CD4-positive, alpha-beta T cell (primary cell): ENCODE measurements at regions of chr10 and their contacts with region 1.

Region 1: GRCh38 chr10:62732841-62733653 is 71.5 kb upstream of the ADO start:
- DNase-seq: peak in 13 of 14 experiments; percentile 12 to 90 (median 39)
- ATAC-seq: peak; percentile 87
- H3K4me3 ChIP-seq: no peak overlapping the region
- H3K4me3 Mint-ChIP-seq: peak overlapping the region; percentile 56
- H3K27ac ChIP-seq: peak overlapping the region; percentile 33 to 66
- H3K27ac Mint-ChIP-seq: no peak overlapping the region
- H3K4me1 ChIP-seq: peaks cover 49% of the 10 kb centered on the region
- H3K4me1 Mint-ChIP-seq: peaks cover 6% of the 10 kb centered on the region
- H3K27me3 ChIP-seq: no peaks in the 10 kb centered on the region
- H3K27me3 Mint-ChIP-seq: no peaks in the 10 kb centered on the region
- CTCF ChIP-seq: no peak

Region 2: DNA sequence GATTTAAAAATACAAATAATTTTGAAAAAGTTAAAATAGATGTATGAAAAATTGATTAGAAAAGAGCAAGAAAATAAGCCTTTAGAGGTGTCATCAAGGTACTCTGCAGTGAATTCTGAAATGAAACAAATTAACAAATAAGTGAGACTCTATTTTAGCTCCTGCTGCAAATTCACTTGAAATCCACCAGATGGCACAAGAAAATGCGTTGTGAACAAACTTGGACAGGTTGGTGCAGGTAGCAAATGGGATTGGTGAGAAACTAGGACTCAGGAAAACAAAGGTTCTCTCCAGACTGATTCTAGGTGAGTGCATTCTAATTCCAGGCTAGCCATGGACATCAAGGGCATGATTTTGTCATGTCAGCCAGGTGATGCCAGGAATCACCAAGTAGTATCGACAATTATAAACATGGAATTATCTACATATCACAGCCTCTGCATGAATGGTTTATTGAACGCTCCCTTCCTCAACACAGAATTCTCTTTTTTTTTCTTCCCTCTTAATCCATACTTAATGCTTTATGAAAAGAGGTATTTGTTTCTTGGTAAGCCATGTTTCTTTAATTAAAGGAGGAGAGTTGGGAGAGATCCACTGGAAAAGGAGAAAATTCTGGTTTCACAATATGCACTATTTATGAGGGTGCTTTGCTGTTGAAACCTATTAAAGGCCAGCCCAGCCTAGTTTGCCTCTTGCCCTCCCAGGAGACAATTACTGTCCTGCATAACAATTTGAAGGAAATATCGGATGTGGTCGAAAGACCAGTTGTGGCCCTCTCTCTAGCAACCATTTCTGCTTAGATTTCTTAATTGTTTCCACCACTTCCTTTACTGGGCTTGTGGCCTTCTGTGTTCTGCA is 240.8 kb before region 1 on chr10:
- CTCF ChIA-PET with region 1: no interaction called
- POLR2A ChIA-PET with region 1: no interaction called
- intact Hi-C with region 1: no loop called
- DNase-seq: peak in 3 of 14 experiments; percentile 25 to 57 (median 52)
- ATAC-seq: no peak
- H3K4me3 ChIP-seq: no peak overlapping the region
- H3K4me3 Mint-ChIP-seq: no peak overlapping the region
- H3K27ac ChIP-seq: no peak overlapping the region
- H3K27ac Mint-ChIP-seq: no peak overlapping the region
- H3K4me1 ChIP-seq: no peaks in the 10 kb centered on the region
- H3K4me1 Mint-ChIP-seq: peaks cover 4% of the 10 kb centered on the region
- H3K27me3 ChIP-seq: no peaks in the 10 kb centered on the region
- H3K27me3 Mint-ChIP-seq: peaks cover 18% of the 10 kb centered on the region
- CTCF ChIP-seq: peak; percentile 63

Region 3: DNA sequence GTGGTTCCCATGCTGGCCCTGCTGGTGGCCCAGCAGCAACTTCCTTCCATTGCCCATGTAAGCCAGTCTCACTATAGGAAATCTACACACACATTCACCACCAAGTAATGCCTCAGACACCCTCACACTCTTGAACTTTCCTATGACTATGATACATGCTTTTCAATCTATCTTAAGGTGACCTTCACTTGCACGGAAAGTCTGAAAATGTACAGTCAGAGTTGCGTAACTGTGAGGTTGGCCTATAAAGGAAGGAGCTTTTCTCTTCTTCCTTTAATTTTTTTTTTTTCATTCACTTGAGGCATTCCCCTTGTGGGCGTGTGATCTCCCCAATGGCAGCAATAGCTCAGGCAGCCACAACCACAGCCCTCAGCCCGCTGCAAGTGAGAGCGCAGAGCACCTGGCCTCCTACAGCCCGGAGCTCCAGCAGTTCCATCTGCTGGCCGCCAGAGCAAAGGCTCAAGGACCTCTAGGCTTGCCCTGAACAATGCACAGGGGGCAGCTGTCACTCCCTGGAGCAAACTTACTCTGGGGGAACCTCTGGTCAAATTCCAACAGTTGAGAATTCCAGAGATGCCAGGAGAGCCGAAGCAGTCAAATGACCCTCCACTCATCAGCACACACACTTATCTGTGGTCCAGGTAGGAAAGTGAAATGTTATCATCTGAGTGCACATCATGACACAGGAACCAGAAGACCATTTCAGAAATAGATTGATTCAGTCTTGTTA is 51.7 kb before region 1 on chr10:
- CTCF ChIA-PET with region 1: interaction called, 9 read pairs
- POLR2A ChIA-PET with region 1: no interaction called
- intact Hi-C with region 1: loop called in 1 of 2 experiments (anchors 1 kb)
- DNase-seq: peak; percentile 25 to 93 (median 45)
- ATAC-seq: peak; percentile 95
- H3K4me3 ChIP-seq: no peak overlapping the region
- H3K4me3 Mint-ChIP-seq: no peak overlapping the region
- H3K27ac ChIP-seq: no peak overlapping the region
- H3K27ac Mint-ChIP-seq: peak overlapping the region; percentile 2
- H3K4me1 ChIP-seq: peaks cover 15% of the 10 kb centered on the region
- H3K4me1 Mint-ChIP-seq: peaks cover 12% of the 10 kb centered on the region
- H3K27me3 ChIP-seq: no peaks in the 10 kb centered on the region
- H3K27me3 Mint-ChIP-seq: no peaks in the 10 kb centered on the region
- CTCF ChIP-seq: no peak

Region 4: GRCh38 chr10:62689712-62690111 is 43.3 kb before region 1 on chr10:
- CTCF ChIA-PET with region 1: interaction called, 4 read pairs
- POLR2A ChIA-PET with region 1: interaction called, 5 read pairs
- intact Hi-C with region 1: loop called (anchors 2 to 5 kb)
- DNase-seq: peak in 3 of 14 experiments; percentile 63 to 79 (median 65)
- ATAC-seq: peak; percentile 42
- H3K4me3 ChIP-seq: peak overlapping the region; percentile 2
- H3K4me3 Mint-ChIP-seq: peak overlapping the region; percentile 74
- H3K27ac ChIP-seq: peak overlapping the region in 1 of 2 donors; percentile 42
- H3K27ac Mint-ChIP-seq: peak overlapping the region; percentile 81
- H3K4me1 ChIP-seq: peaks cover 44% of the 10 kb centered on the region
- H3K4me1 Mint-ChIP-seq: peaks cover 58% of the 10 kb centered on the region
- H3K27me3 ChIP-seq: no peaks in the 10 kb centered on the region
- H3K27me3 Mint-ChIP-seq: no peaks in the 10 kb centered on the region
- CTCF ChIP-seq: no peak

Region 5: DNA sequence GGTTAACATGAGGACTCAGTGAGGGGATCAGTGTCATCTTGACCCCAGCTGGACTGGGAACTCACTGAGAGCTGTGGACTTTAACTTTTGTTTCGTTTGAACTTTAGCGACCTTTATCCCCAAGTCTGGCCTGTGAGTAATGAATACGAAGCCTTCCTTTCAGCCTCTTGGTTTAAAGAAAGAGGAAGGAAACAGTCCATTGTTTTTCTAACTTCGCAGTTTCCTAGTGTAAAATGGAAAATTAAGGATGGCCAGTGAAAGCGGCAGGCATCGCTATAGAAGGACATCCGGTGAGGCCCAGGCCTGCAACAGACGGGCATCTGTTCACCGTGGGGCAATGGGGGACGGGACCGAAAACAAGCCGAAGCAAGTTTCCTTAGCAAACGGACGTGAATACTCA is 27.4 kb after region 1 on chr10:
- CTCF ChIA-PET with region 1: no interaction called
- POLR2A ChIA-PET with region 1: interaction called, 10 read pairs
- intact Hi-C with region 1: loop called in 1 of 2 experiments (anchors 1 kb)
- DNase-seq: peak in 1 of 14 experiments; percentile 14
- ATAC-seq: no peak
- H3K4me3 ChIP-seq: no peak overlapping the region
- H3K4me3 Mint-ChIP-seq: no peak overlapping the region
- H3K27ac ChIP-seq: no peak overlapping the region
- H3K27ac Mint-ChIP-seq: no peak overlapping the region
- H3K4me1 ChIP-seq: peaks cover 12% of the 10 kb centered on the region
- H3K4me1 Mint-ChIP-seq: peaks cover 13% of the 10 kb centered on the region
- H3K27me3 ChIP-seq: no peaks in the 10 kb centered on the region
- H3K27me3 Mint-ChIP-seq: no peaks in the 10 kb centered on the region
- CTCF ChIP-seq: no peak

Region 6: GRCh38 chr10:62779487-62780248 is 46.6 kb after region 1 on chr10:
- CTCF ChIA-PET with region 1: interaction called, 3 read pairs
- POLR2A ChIA-PET with region 1: interaction called, 25 read pairs
- intact Hi-C with region 1: loop called in 1 of 2 experiments (anchors 1 kb)
- DNase-seq: peak; percentile 59 to 95 (median 71)
- ATAC-seq: peak; percentile 99
- H3K4me3 ChIP-seq: no peak overlapping the region
- H3K4me3 Mint-ChIP-seq: no peak overlapping the region
- H3K27ac ChIP-seq: no peak overlapping the region
- H3K27ac Mint-ChIP-seq: peak overlapping the region; percentile 34
- H3K4me1 ChIP-seq: peaks cover 16% of the 10 kb centered on the region
- H3K4me1 Mint-ChIP-seq: peaks cover 15% of the 10 kb centered on the region
- H3K27me3 ChIP-seq: no peaks in the 10 kb centered on the region
- H3K27me3 Mint-ChIP-seq: no peaks in the 10 kb centered on the region
- CTCF ChIP-seq: no peak

Region 7: GRCh38 chr10:62804356-62805230 is 71.5 kb after region 1 on chr10 and contains the start of gene ADO:
- CTCF ChIA-PET with region 1: interaction called, 3 read pairs
- POLR2A ChIA-PET with region 1: interaction called, 27 read pairs
- intact Hi-C with region 1: loop called (anchors 1 to 5 kb)
- DNase-seq: peak; percentile 63 to 90 (median 72)
- ATAC-seq: peak; percentile 89
- H3K4me3 ChIP-seq: peak within 1 kb of the TSS; percentile 64
- H3K4me3 Mint-ChIP-seq: peak within 1 kb of the TSS; percentile 93
- H3K27ac ChIP-seq: peak within 1 kb of the TSS; percentile 76 to 94
- H3K27ac Mint-ChIP-seq: peak within 1 kb of the TSS; percentile 94
- H3K4me1 ChIP-seq: peaks cover 19% of the 10 kb centered on the region
- H3K4me1 Mint-ChIP-seq: peaks cover 44% of the 10 kb centered on the region
- H3K27me3 ChIP-seq: no peaks in the 10 kb centered on the region
- H3K27me3 Mint-ChIP-seq: no peaks in the 10 kb centered on the region
- CTCF ChIP-seq: no peak
- total RNA-seq, gene ADO: 14.3 to 15.9 TPM